ENCODE measurements at regions of chr5 and their contacts with region 1.

Region 1: GRCh38 chr5:140351609-140352334 is 5.4 kb upstream of the HBEGF start:
- DNase-seq: peak; percentile 70
- CTCF ChIP-seq: peak; percentile 80

Region 2: DNA sequence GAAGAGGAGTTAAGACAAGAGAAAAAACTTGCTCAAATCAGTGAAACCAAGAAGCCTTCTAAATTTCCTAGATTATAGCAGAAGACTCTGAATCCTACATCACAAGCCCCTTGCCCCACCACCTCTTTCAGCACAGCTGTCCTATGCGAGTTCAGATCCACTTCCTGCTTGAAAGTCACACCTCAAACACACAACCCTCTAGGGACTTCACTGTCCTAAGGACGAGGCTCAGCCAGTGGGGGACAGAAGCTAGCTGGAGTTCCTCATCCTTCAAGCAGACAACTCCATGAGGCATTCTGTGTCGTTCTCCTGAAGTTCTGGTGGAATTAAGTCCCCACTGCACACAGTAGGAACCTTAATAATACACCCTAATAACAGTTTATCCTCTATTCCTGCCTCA is 352.9 kb before region 1 on chr5:
- CTCF ChIA-PET with region 1: no interaction called
- POLR2A ChIA-PET with region 1: no interaction called
- DNase-seq: no peak
- CTCF ChIP-seq: no peak

Region 3: DNA sequence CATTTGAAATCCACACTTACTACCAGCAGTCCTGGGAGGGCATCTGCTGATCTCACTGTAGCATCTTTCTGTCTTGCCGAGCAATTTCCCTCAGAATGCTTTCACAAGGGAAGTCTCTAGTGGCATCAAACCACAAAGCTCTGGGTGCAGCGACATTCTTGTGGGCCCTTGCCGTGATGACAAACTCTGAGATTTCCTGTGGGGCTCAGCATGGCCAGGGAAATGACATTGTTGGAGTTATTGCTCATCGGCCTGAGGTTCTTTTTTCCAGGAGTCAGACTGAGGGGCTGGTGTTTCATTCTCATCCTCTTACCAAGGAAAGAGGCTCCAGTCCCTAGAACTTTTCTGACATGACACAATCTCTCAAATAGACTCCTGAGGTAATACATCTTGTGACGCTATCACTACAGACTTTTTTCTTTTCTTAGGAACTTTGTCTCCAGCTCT is 100.2 kb before region 1 on chr5:
- CTCF ChIA-PET with region 1: interaction called, 462 read pairs
- POLR2A ChIA-PET with region 1: no interaction called
- DNase-seq: no peak
- CTCF ChIP-seq: no peak

Region 4: GRCh38 chr5:140261403-140262171 is 90.2 kb before region 1 on chr5:
- CTCF ChIA-PET with region 1: interaction called, 22 read pairs
- POLR2A ChIA-PET with region 1: no interaction called
- DNase-seq: peak; percentile 34
- CTCF ChIP-seq: no peak

Region 5: GRCh38 chr5:140302786-140303639 is 48.8 kb before region 1 on chr5 and contains the start of gene PFDN1:
- CTCF ChIA-PET with region 1: interaction called, 11 read pairs
- POLR2A ChIA-PET with region 1: no interaction called
- DNase-seq: peak; percentile 97
- CTCF ChIP-seq: no peak

Region 6: DNA sequence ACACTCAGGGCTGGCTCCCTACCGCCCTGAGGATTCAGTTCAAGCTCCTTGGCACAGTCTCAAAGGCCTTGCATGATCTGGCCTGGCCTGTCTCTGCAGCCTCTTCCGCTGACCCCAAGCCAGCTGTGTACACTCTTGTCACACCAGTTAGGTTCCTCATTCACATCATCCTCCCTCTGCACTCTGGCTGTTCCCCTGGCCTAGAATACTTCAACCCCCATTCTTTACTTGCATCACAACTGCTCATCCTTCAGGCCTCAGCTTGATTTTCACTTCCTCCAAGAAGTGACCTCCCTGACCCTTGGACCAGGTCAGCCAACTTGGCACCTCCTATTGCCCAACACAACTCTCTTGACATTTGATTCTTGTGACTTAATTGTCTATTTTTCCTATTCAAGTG is 30.0 kb before region 1 on chr5:
- CTCF ChIA-PET with region 1: interaction called, 15 read pairs
- POLR2A ChIA-PET with region 1: no interaction called
- DNase-seq: no peak
- CTCF ChIP-seq: no peak

Region 7: GRCh38 chr5:140327589-140327988 is 24.2 kb before region 1 on chr5:
- CTCF ChIA-PET with region 1: interaction called, 23 read pairs
- POLR2A ChIA-PET with region 1: no interaction called
- DNase-seq: no peak
- CTCF ChIP-seq: no peak

Region 8: GRCh38 chr5:140524003-140524402 is 172.2 kb after region 1 on chr5:
- CTCF ChIA-PET with region 1: no interaction called
- POLR2A ChIA-PET with region 1: no interaction called
- DNase-seq: no peak
- CTCF ChIP-seq: no peak